ENCODE measurements at regions of chr5 and their contacts with region 1.

Region 1: DNA sequence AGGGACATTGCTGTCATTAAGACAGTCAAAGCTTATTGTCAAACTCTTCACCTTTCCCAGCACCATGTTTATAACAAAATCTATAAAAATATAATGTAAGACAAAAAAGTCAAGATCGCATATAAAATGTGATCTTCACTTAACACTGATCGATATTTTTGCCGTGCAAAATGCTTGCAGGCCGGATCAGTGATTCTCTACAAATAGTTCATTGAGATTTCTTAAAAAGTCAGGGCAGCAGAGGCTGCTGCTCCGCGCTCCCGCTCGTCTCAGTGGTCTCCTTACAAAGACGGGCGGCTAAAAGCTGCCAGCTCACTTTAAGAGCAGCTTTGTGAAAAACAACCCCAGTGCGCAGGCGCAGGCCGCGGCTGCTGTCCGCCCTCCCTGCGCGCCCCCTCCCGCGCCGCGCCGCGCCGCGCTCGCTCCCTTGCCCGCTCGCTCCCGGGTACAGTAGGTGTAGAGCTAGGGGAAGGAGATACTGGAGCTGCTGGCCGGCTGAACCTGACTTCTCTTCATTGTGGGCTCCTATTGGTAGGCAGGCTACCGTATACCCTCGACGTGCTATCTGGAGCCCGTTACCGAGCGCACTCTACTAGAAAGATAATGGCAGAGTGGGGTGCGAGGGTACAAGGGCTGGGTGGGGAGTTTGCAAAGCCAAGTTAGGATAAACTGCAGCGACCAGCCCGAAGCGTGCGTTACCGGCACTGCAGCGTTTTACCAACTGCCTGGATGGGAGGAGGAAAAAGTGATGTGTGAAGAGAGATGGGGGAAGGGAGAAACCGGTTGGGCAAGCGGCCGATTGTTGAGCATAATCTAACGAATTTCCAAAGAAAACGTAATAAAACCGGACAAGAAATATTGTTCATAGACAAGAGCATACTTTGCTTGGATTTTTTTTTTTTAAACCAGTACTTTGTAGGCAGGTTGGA is at the start of gene ARRDC3:
- DNase-seq: peak; percentile 83 to 97
- H3K4me3 ChIP-seq: peak within 1 kb of the TSS; percentile 98
- H3K27ac ChIP-seq: peak within 1 kb of the TSS; percentile 98
- H3K4me1 ChIP-seq: peaks cover 14% of the 10 kb centered on the region
- H3K27me3 ChIP-seq: no peaks in the 10 kb centered on the region
- CTCF ChIP-seq: 0 out of 2 replicates have a peak, but pooled peaks have one; percentile 29
- total RNA-seq, gene ARRDC3: 25.0 and 32.0 TPM in 2 replicates

Region 2: DNA sequence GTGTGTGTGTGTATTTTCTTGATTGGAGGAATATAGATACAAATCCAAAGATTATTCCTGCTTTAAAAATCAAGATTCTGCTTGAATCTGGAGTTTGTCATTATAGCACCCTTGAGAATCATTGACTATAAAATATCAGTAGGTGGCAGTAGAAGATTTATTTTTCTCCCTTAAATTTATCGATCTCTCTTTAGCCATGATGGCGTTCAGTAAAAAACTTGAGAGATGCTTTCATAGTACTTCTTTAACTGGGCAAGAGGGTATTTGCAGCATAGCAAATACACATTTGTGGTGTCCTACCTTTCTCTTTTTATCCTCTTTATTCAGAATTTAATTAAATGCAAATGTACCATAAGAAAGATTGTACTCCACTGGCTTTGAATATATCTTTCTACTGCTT is 517.0 kb before region 1 on chr5:
- CTCF ChIA-PET with region 1: interaction called, 10 read pairs
- POLR2A ChIA-PET with region 1: no interaction called
- intact Hi-C with region 1: loop called (anchors 1 kb)
- DNase-seq: peak in 1 of 2 experiments; percentile 45
- H3K4me3 ChIP-seq: no peak overlapping the region
- H3K27ac ChIP-seq: no peak overlapping the region
- H3K4me1 ChIP-seq: no peaks in the 10 kb centered on the region
- H3K27me3 ChIP-seq: no peaks in the 10 kb centered on the region
- CTCF ChIP-seq: peak; percentile 78

Region 3: GRCh38 chr5:91101600-91102379 is 281.5 kb before region 1 on chr5:
- CTCF ChIA-PET with region 1: interaction called, 7 read pairs
- POLR2A ChIA-PET with region 1: interaction called, 3 read pairs
- intact Hi-C with region 1: loop called (anchors 1 kb)
- DNase-seq: peak; percentile 54 to 61
- H3K4me3 ChIP-seq: no peak overlapping the region
- H3K27ac ChIP-seq: no peak overlapping the region
- H3K4me1 ChIP-seq: peaks cover 7% of the 10 kb centered on the region; the same call in 1 of the 2 replicates
- H3K27me3 ChIP-seq: no peaks in the 10 kb centered on the region
- CTCF ChIP-seq: peak; percentile 86

Region 4: GRCh38 chr5:91162534-91163381 is 220.5 kb before region 1 on chr5:
- CTCF ChIA-PET with region 1: no interaction called
- POLR2A ChIA-PET with region 1: no interaction called
- intact Hi-C with region 1: loop called (anchors 1 kb)
- DNase-seq: peak; percentile 83 to 97
- H3K4me3 ChIP-seq: peak overlapping the region; percentile 32; the same call in 1 of the 2 replicates
- H3K27ac ChIP-seq: peak overlapping the region; percentile 78
- H3K4me1 ChIP-seq: peaks cover 60% of the 10 kb centered on the region
- H3K27me3 ChIP-seq: no peaks in the 10 kb centered on the region
- CTCF ChIP-seq: no peak

Region 5: DNA sequence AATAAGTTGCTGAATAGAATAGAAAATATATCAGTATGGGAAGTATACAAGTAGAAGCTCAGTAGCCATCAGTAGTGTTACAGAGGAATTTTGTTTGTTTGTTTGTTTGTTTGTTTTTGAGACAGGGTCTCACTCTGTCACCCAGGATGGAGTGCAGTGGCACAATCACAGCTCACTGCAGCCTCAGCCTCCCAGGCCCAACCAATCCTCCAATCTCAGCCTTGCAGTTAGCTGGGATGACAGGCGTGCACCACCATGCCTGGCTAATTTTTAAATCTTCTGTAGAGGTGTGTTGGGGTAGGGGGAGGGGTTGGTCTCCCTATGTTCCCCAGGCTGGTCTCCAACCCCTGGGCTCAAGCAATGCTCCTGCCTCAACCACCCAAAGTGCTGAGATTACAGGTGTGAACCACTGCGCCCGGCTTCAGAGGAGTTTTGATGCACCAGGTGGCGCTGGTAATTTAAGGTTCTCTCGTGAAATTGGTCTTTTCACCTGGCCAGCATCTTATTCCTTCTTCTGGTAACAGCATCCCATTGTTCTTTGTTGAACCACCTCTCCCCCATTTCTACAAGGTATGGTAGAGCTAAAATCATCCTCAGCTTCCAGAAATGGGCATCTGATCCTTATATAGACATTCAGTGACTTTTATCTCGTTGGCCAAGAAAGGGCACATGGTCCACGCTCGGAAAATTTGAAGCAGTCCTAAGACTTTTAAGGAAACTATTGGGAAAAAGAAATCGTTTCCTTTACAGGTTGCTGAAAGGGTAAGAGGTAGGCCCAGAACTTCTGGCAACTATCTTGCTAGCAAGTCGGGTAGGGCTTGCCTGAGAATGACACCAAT is 157.2 kb before region 1 on chr5:
- CTCF ChIA-PET with region 1: interaction called, 7 read pairs
- POLR2A ChIA-PET with region 1: no interaction called
- intact Hi-C with region 1: loop called (anchors 1 kb)
- DNase-seq: peak in 1 of 2 experiments; percentile 46
- H3K4me3 ChIP-seq: no peak overlapping the region
- H3K27ac ChIP-seq: no peak overlapping the region
- H3K4me1 ChIP-seq: no peaks in the 10 kb centered on the region
- H3K27me3 ChIP-seq: no peaks in the 10 kb centered on the region
- CTCF ChIP-seq: peak; percentile 65

Region 6: DNA sequence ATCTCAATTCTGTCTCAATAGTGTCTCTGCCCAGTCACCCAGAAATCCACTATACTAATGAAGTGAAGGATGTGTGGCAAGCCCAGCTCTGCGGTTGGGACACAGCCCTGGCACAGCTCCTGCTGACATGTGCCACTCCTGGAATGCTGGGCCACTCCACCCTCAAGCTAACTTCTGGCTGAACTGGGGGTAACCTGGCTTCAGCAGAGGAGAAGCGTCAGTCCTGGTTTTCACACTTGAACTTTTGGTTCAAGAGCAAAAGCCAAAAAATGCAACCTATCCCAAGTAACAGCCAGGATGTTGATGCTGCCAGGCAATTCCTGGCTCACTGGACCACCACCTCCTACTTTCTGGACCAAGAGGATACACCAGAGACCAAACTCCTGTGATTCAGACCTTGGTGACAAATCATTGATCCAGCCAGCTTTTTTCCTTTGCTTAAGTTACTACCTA is 86.6 kb before region 1 on chr5:
- CTCF ChIA-PET with region 1: interaction called, 8 read pairs
- POLR2A ChIA-PET with region 1: interaction called, 9 read pairs
- intact Hi-C with region 1: loop called (anchors 1 kb)
- DNase-seq: peak; percentile 84 to 94
- H3K4me3 ChIP-seq: peak overlapping the region; percentile 41; the same call in 1 of the 2 replicates
- H3K27ac ChIP-seq: peak overlapping the region; percentile 94
- H3K4me1 ChIP-seq: peaks cover 64% of the 10 kb centered on the region
- H3K27me3 ChIP-seq: no peaks in the 10 kb centered on the region
- CTCF ChIP-seq: no peak

Region 7: GRCh38 chr5:91332267-91333045 is 50.8 kb before region 1 on chr5:
- CTCF ChIA-PET with region 1: no interaction called
- POLR2A ChIA-PET with region 1: interaction called, 14 read pairs
- intact Hi-C with region 1: loop called (anchors 1 kb)
- DNase-seq: peak; percentile 55 to 93
- H3K4me3 ChIP-seq: no peak overlapping the region
- H3K27ac ChIP-seq: peak overlapping the region; percentile 59
- H3K4me1 ChIP-seq: peaks cover 27% of the 10 kb centered on the region
- H3K27me3 ChIP-seq: no peaks in the 10 kb centered on the region
- CTCF ChIP-seq: no peak

Region 8: GRCh38 chr5:91486638-91487037 is 103.3 kb after region 1 on chr5:
- CTCF ChIA-PET with region 1: no interaction called
- POLR2A ChIA-PET with region 1: no interaction called
- intact Hi-C with region 1: no loop called
- DNase-seq: no peak
- H3K4me3 ChIP-seq: no peak overlapping the region
- H3K27ac ChIP-seq: no peak overlapping the region
- H3K4me1 ChIP-seq: no peaks in the 10 kb centered on the region
- H3K27me3 ChIP-seq: no peaks in the 10 kb centered on the region
- CTCF ChIP-seq: no peak